Posterior vena cava (tissue), 2 donors: ENCODE measurements at regions of chr6 and their contacts with region 1.

Region 1: GRCh38 chr6:150891888-150892485 is 26.5 kb downstream of the MTHFD1L start:
- DNase-seq: peak; percentile 76

Region 2: GRCh38 chr6:150940941-150941340 is 49.0 kb after region 1 on chr6:
- intact Hi-C with region 1: loop called in 1 of 2 experiments (anchors 10 kb)
- DNase-seq: no peak

Region 3: GRCh38 chr6:151004415-151005024 is 112.5 kb after region 1 on chr6:
- intact Hi-C with region 1: loop called in 1 of 2 experiments (anchors 10 kb)
- DNase-seq: no peak

Region 4: GRCh38 chr6:151330134-151330696 is 438.2 kb after region 1 on chr6:
- intact Hi-C with region 1: loop called (anchors 2 to 5 kb)
- DNase-seq: no peak